Activated T-helper 1 cell treated with anti-CD3 and anti-CD28 coated beads, Interleukin-12 subunit alpha, Interleukin-12 subunit beta, Interleukin-2, Interleukin-4 antibody, amounts not matched to agents 30 ng/mL and 10 ng/mL and 1 ng/mL, durations not matched to agents 14 hours and 24 hours and 36 hours (primary cell): ENCODE measurements at regions of chr13 and their contacts with region 1.

Region 1: GRCh38 chr13:48155848-48156247 is 60.9 kb upstream of the MED4 start:
- DNase-seq: peak; percentile 9
- H3K4me3 Mint-ChIP-seq: no peak overlapping the region
- H3K27ac Mint-ChIP-seq: peak overlapping the region; percentile 30
- H3K4me1 Mint-ChIP-seq: peaks cover 73% of the 10 kb centered on the region
- H3K27me3 Mint-ChIP-seq: no peaks in the 10 kb centered on the region

Region 2: DNA sequence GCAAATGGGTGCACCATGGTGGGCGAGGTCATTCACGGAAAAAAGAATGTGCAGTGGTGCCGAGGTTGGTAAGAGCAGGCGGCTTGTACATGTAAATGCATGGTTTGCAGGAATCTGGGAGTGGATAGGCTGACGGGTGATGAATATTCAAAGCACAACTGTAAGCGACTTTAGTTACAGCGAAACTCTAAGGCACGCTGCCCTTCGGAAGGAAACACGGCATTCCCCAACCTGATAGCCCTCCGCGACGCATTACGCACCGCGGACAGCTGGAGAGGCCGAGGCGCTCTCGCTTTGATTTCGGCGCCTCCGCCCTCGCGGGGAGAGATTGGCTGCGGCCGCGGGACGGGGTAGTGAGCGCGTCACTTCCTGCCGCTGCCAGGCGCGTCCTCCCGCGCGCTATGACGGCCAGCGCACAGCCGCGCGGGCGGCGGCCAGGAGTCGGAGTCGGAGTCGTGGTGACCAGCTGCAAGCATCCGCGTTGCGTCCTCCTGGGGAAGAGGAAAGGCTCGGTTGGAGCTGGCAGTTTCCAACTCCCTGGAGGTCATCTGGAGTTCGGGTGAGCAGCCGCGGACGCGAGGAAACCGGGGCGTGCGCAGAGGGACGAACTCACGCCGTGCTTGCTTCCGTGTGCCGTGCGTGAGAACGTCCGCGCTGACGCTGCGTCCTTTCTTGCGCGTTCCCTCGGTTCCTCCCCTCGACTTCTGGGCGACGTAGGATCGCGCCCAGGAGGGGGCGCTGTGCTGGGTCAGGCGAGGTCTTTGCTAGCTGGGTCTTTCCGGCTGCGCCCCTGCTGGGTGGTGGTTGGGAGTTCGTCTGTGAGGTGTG is 118.3 kb before region 1 on chr13 and contains the start of gene NUDT15:
- intact Hi-C with region 1: no loop called
- DNase-seq: peak; percentile 94
- H3K4me3 Mint-ChIP-seq: peak within 1 kb of the TSS; percentile 98
- H3K27ac Mint-ChIP-seq: peak within 1 kb of the TSS; percentile 99
- H3K4me1 Mint-ChIP-seq: peaks cover 46% of the 10 kb centered on the region
- H3K27me3 Mint-ChIP-seq: no peaks in the 10 kb centered on the region
- total RNA-seq, gene NUDT15: 15.3 and 16.8 TPM in 2 replicates

Region 3: GRCh38 chr13:48138270-48138669 is 17.6 kb before region 1 on chr13:
- intact Hi-C with region 1: loop called (anchors 1 kb)
- DNase-seq: no peak
- H3K4me3 Mint-ChIP-seq: no peak overlapping the region
- H3K27ac Mint-ChIP-seq: no peak overlapping the region
- H3K4me1 Mint-ChIP-seq: no peaks in the 10 kb centered on the region
- H3K27me3 Mint-ChIP-seq: peaks cover 5% of the 10 kb centered on the region

Region 4: GRCh38 chr13:48186722-48187121 is 30.9 kb after region 1 on chr13:
- intact Hi-C with region 1: loop called (anchors 1 kb)
- DNase-seq: no peak
- H3K4me3 Mint-ChIP-seq: no peak overlapping the region
- H3K27ac Mint-ChIP-seq: no peak overlapping the region
- H3K4me1 Mint-ChIP-seq: peaks cover 21% of the 10 kb centered on the region
- H3K27me3 Mint-ChIP-seq: peaks cover 10% of the 10 kb centered on the region